CD4-positive, alpha-beta memory T cell (primary cell): ENCODE measurements at regions of chr18 and their contacts with region 1.

Region 1: DNA sequence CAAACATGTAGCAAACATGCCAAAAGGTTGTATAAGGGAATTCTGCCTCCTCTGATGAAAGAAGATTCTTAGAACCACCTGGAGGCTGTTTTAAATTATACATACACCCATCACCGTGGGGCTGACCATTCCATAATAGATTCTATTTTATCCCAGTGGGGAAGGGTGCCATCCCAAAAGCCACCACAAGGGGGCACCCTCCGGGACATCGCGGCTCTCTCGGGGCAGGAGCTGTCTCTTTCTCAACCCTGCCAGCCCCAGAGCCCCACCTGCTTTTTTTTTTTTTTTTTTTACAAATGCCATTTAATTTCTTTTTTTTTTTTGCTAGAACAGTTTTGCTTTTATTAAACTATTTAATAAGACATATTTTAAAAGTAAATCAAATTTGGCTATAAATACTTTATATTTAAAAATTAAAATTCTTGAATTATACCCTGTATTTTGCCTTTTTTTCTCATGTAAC is 8.6 kb upstream of the MTCL1 start:
- DNase-seq: peak; percentile 62 to 72 (median 64)
- H3K4me3 ChIP-seq: no peak overlapping the region
- H3K4me3 Mint-ChIP-seq: no peak overlapping the region
- H3K27ac ChIP-seq: no peak overlapping the region
- H3K27ac Mint-ChIP-seq: no peak overlapping the region
- H3K4me1 ChIP-seq: no peaks in the 10 kb centered on the region
- H3K4me1 Mint-ChIP-seq: no peaks in the 10 kb centered on the region
- H3K27me3 ChIP-seq: no peaks in the 10 kb centered on the region
- H3K27me3 Mint-ChIP-seq: peaks cover 14 to 19% of the 10 kb centered on the region in 2 donors

Region 2: GRCh38 chr18:8685141-8685913 is 11.5 kb before region 1 on chr18:
- CTCF ChIA-PET with region 1: interaction called, 25 read pairs
- POLR2A ChIA-PET with region 1: no interaction called
- intact Hi-C with region 1: no loop called
- DNase-seq: no peak
- H3K4me3 ChIP-seq: no peak overlapping the region
- H3K4me3 Mint-ChIP-seq: no peak overlapping the region
- H3K27ac ChIP-seq: no peak overlapping the region
- H3K27ac Mint-ChIP-seq: no peak overlapping the region
- H3K4me1 ChIP-seq: no peaks in the 10 kb centered on the region
- H3K4me1 Mint-ChIP-seq: no peaks in the 10 kb centered on the region
- H3K27me3 ChIP-seq: no peaks in the 10 kb centered on the region
- H3K27me3 Mint-ChIP-seq: peaks cover 0 to 4% of the 10 kb centered on the region in 2 donors

Region 3: GRCh38 chr18:8754995-8755955 is 58.5 kb after region 1 on chr18:
- CTCF ChIA-PET with region 1: interaction called, 3 read pairs
- POLR2A ChIA-PET with region 1: no interaction called
- intact Hi-C with region 1: loop called (anchors 1 kb)
- DNase-seq: peak; percentile 77 to 88 (median 84)
- H3K4me3 ChIP-seq: peak overlapping the region in 1 of 2 donors; percentile 12
- H3K4me3 Mint-ChIP-seq: peak overlapping the region; percentile 79 to 89 (median 84)
- H3K27ac ChIP-seq: no peak overlapping the region
- H3K27ac Mint-ChIP-seq: peak overlapping the region; percentile 53 to 96 (median 88)
- H3K4me1 ChIP-seq: peaks cover 37% of the 10 kb centered on the region
- H3K4me1 Mint-ChIP-seq: peaks cover 30 to 48% (median 39%) of the 10 kb centered on the region in 4 donors
- H3K27me3 ChIP-seq: no peaks in the 10 kb centered on the region
- H3K27me3 Mint-ChIP-seq: no peaks in the 10 kb centered on the region

Region 4: DNA sequence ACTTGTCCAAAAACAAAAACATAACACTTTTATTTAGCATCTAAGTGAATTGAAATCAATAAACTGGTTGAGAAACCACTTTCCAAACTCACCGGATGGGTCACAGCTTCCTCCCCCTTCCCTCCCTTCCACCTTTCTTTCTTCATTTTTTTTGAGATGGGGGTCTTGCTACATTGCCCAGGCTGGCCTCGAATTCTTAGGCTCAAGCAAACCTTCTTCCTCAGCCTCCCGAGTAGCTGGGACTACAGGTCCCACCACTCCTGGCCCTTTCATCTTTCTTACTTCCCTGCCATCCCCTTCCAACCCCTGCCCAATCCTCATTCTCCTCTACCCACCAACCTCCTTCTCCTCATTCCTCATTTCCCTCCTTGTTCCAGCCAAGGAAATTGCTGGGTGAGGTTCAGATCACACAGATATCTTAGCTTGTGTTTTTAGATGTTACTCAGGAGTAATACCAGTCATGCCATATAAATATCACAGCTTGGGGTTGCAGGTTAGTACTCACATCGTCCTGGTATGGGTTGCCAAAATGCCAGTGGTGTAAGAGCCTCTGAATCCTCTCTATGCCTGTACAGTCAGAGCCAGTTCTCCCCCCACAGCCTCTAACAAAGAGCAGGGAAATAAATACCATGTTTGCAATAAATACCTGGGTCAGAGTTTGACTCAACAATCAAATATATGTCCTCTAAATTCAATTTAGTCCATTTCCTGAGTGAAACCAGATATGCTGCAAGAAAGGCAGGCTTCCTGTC is 273.0 kb after region 1 on chr18:
- CTCF ChIA-PET with region 1: no interaction called
- POLR2A ChIA-PET with region 1: no interaction called
- intact Hi-C with region 1: no loop called
- DNase-seq: no peak
- H3K4me3 ChIP-seq: no peak overlapping the region
- H3K4me3 Mint-ChIP-seq: no peak overlapping the region
- H3K27ac ChIP-seq: no peak overlapping the region
- H3K27ac Mint-ChIP-seq: no peak overlapping the region
- H3K4me1 ChIP-seq: no peaks in the 10 kb centered on the region
- H3K4me1 Mint-ChIP-seq: no peaks in the 10 kb centered on the region
- H3K27me3 ChIP-seq: no peaks in the 10 kb centered on the region
- H3K27me3 Mint-ChIP-seq: peaks cover 13 to 17% of the 10 kb centered on the region in 2 donors

Region 5: GRCh38 chr18:8982416-8983184 is 285.8 kb after region 1 on chr18:
- CTCF ChIA-PET with region 1: interaction called, 88 read pairs
- POLR2A ChIA-PET with region 1: no interaction called
- intact Hi-C with region 1: no loop called
- DNase-seq: peak in 1 of 5 donors; percentile 4
- H3K4me3 ChIP-seq: no peak overlapping the region
- H3K4me3 Mint-ChIP-seq: no peak overlapping the region
- H3K27ac ChIP-seq: no peak overlapping the region
- H3K27ac Mint-ChIP-seq: no peak overlapping the region
- H3K4me1 ChIP-seq: no peaks in the 10 kb centered on the region
- H3K4me1 Mint-ChIP-seq: no peaks in the 10 kb centered on the region
- H3K27me3 ChIP-seq: no peaks in the 10 kb centered on the region
- H3K27me3 Mint-ChIP-seq: peaks cover 0 to 7% of the 10 kb centered on the region in 2 donors

Region 6: DNA sequence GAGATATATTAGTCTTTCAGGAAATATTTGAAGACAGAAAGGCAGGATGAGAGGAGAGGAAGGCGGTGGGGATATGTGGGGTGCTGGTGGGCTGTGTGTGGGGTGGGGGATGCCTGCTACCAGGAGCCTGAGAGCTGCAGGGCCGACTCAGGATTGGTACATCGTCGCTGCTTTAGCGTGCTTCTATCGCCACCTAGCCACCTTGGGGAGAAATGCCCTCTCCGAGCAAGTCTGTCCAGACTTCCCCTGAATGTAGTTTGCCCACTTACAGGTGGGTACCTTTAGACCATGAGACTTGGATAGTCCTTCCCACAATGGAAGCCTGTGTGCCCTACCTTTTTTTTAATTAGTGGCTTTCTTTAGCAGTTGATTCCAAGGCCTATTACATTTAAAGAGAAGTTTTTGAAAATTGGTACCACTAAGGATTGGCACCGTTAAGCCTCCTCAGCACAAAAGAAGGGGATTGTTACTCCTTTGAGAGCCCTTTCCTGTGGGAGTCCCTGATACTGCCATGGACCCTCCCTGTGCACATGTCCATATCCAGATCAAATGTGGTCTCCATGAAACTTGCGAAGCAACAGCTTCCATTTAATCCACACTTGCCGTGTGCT is 291.6 kb after region 1 on chr18:
- CTCF ChIA-PET with region 1: interaction called, 88 read pairs
- POLR2A ChIA-PET with region 1: no interaction called
- intact Hi-C with region 1: loop called (anchors 1 kb)
- DNase-seq: peak in 4 of 5 donors; percentile 42 to 49 (median 46)
- H3K4me3 ChIP-seq: no peak overlapping the region
- H3K4me3 Mint-ChIP-seq: no peak overlapping the region
- H3K27ac ChIP-seq: no peak overlapping the region
- H3K27ac Mint-ChIP-seq: no peak overlapping the region
- H3K4me1 ChIP-seq: no peaks in the 10 kb centered on the region
- H3K4me1 Mint-ChIP-seq: no peaks in the 10 kb centered on the region
- H3K27me3 ChIP-seq: no peaks in the 10 kb centered on the region
- H3K27me3 Mint-ChIP-seq: peaks cover 9 to 18% of the 10 kb centered on the region in 2 donors

Region 7: GRCh38 chr18:9516437-9517064 is 819.8 kb after region 1 on chr18:
- CTCF ChIA-PET with region 1: no interaction called
- POLR2A ChIA-PET with region 1: no interaction called
- intact Hi-C with region 1: loop called (anchors 1 kb)
- DNase-seq: peak in 4 of 5 donors; percentile 35 to 50 (median 46)
- H3K4me3 ChIP-seq: no peak overlapping the region
- H3K4me3 Mint-ChIP-seq: no peak overlapping the region
- H3K27ac ChIP-seq: no peak overlapping the region
- H3K27ac Mint-ChIP-seq: peak overlapping the region in 3 of 7 donors; percentile 14 to 61 (median 30)
- H3K4me1 ChIP-seq: no peaks in the 10 kb centered on the region
- H3K4me1 Mint-ChIP-seq: peaks cover 0 to 12% (median 5%) of the 10 kb centered on the region in 4 donors
- H3K27me3 ChIP-seq: no peaks in the 10 kb centered on the region
- H3K27me3 Mint-ChIP-seq: no peaks in the 10 kb centered on the region